Activated CD8-positive, alpha-beta T cell treated with anti-CD3 and anti-CD28 coated beads, Interleukin-2, amount 10 ng/mL, durations not matched to agents 7 days and 5 days (primary cell): ENCODE measurements at regions of chr17 and their contacts with region 1.

Region 1: GRCh38 chr17:42221937-42222745 is 27.8 kb upstream of the GHDC start:
- DNase-seq: peak; percentile 69
- ATAC-seq: peak; percentile 82
- H3K4me3 Mint-ChIP-seq: no peak overlapping the region
- H3K27ac Mint-ChIP-seq: peak overlapping the region; percentile 26
- H3K4me1 Mint-ChIP-seq: peaks cover 2% of the 10 kb centered on the region
- H3K27me3 Mint-ChIP-seq: no peaks in the 10 kb centered on the region

Region 2: DNA sequence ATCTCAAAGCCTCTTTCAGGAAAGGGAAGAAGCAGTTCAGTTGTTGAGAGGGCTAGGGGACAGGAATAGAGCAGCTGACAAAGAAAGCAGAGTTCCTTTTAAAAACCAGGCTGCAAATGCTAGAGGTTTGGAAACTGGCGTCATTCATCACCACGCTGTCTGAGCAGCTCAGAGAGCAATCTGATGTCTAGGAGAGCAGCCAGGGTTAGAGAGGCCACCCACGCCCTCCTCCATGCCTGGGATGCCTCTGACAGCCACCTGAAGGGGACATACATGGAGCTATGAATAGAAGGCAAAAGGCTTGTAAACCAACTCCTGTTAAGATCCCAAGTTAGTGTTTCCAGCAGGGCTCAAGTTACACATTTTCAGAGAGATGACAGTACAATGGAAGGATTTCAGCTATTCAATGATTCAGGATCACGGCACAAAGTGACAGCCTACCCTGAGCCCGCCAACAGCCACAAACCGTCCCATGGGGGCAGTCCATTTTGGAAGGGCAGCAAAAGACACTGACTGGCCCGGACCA is 79.7 kb before region 1 on chr17:
- CTCF ChIA-PET with region 1: no interaction called
- POLR2A ChIA-PET with region 1: no interaction called
- DNase-seq: no peak
- ATAC-seq: no peak
- H3K4me3 Mint-ChIP-seq: no peak overlapping the region
- H3K27ac Mint-ChIP-seq: no peak overlapping the region
- H3K4me1 Mint-ChIP-seq: peaks cover 5% of the 10 kb centered on the region
- H3K27me3 Mint-ChIP-seq: no peaks in the 10 kb centered on the region

Region 3: GRCh38 chr17:42171831-42172230 is 50.3 kb before region 1 on chr17:
- CTCF ChIA-PET with region 1: no interaction called
- POLR2A ChIA-PET with region 1: no interaction called
- DNase-seq: no peak
- ATAC-seq: no peak
- H3K4me3 Mint-ChIP-seq: no peak overlapping the region
- H3K27ac Mint-ChIP-seq: no peak overlapping the region
- H3K4me1 Mint-ChIP-seq: no peaks in the 10 kb centered on the region
- H3K27me3 Mint-ChIP-seq: no peaks in the 10 kb centered on the region

Region 4: DNA sequence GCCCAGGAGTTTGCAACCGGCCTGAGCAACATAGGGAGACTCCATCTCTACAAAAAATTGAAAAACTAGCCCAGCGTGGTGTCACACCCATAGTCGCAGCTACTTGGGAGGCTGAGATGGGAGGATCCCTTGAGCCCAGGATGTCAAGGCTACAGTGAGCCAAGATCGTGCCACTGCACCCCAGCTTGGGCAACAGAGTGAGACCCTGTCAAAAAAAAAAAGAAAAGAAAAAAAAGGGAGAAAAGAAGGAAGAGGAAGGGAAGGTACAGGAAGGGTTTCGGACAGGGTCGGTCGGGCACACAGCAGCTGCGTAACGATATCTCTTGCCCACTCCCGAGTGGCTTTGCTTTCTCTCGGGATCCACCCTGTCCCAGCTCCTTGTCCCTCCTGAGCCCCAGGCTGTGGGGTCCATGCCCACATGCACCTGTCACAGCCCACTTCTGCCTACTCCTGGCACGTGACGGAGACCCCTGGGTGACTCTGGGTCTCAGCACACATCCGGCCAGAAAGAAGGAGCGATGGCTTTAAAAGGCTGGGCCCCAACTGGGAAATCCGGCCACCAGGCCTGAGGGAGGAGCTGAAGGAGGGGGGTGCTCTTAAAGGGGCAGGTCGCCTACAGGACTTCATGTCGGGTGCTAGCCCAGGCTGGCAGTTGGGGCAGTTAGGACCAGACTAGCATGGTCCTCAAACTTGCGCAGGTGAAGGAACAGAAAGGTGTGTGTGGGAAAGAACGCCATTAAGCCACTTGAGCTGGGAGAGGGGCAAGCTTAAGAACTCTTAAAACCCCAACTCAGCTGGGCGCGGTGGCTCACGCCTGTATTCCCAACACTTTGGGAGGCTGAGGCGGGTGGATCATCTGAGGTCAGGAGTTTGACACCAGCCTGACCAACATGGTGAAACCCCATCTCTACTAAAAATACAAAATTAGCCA is 27.9 kb before region 1 on chr17 and contains the start of gene GHDC:
- CTCF ChIA-PET with region 1: interaction called, 18 read pairs
- POLR2A ChIA-PET with region 1: no interaction called
- DNase-seq: peak; percentile 90
- ATAC-seq: peak; percentile 98
- H3K4me3 Mint-ChIP-seq: peak within 1 kb of the TSS; percentile 92
- H3K27ac Mint-ChIP-seq: peak within 1 kb of the TSS; percentile 96
- H3K4me1 Mint-ChIP-seq: peaks cover 24% of the 10 kb centered on the region
- H3K27me3 Mint-ChIP-seq: no peaks in the 10 kb centered on the region
- total RNA-seq, gene GHDC: 16.6 to 17.2 TPM

Region 5: GRCh38 chr17:42248351-42249179 is 26.4 kb after region 1 on chr17:
- CTCF ChIA-PET with region 1: interaction called, 34 read pairs
- POLR2A ChIA-PET with region 1: interaction called, 15 read pairs
- DNase-seq: peak; percentile 88
- ATAC-seq: peak; percentile 93
- H3K4me3 Mint-ChIP-seq: peak overlapping the region; percentile 78
- H3K27ac Mint-ChIP-seq: peak overlapping the region; percentile 90
- H3K4me1 Mint-ChIP-seq: peaks cover 65% of the 10 kb centered on the region
- H3K27me3 Mint-ChIP-seq: no peaks in the 10 kb centered on the region

Region 6: GRCh38 chr17:42276359-42276608 is 54.1 kb after region 1 on chr17 and contains the start of gene STAT5B:
- CTCF ChIA-PET with region 1: interaction called, 35 read pairs
- POLR2A ChIA-PET with region 1: interaction called, 5 read pairs
- DNase-seq: peak; percentile 74
- ATAC-seq: peak; percentile 69
- H3K4me3 Mint-ChIP-seq: peak within 1 kb of the TSS; percentile 93
- H3K27ac Mint-ChIP-seq: peak within 1 kb of the TSS; percentile 86
- H3K4me1 Mint-ChIP-seq: peaks cover 46% of the 10 kb centered on the region
- H3K27me3 Mint-ChIP-seq: no peaks in the 10 kb centered on the region
- total RNA-seq, gene STAT5B: 92.7 to 94.4 TPM

Region 7: DNA sequence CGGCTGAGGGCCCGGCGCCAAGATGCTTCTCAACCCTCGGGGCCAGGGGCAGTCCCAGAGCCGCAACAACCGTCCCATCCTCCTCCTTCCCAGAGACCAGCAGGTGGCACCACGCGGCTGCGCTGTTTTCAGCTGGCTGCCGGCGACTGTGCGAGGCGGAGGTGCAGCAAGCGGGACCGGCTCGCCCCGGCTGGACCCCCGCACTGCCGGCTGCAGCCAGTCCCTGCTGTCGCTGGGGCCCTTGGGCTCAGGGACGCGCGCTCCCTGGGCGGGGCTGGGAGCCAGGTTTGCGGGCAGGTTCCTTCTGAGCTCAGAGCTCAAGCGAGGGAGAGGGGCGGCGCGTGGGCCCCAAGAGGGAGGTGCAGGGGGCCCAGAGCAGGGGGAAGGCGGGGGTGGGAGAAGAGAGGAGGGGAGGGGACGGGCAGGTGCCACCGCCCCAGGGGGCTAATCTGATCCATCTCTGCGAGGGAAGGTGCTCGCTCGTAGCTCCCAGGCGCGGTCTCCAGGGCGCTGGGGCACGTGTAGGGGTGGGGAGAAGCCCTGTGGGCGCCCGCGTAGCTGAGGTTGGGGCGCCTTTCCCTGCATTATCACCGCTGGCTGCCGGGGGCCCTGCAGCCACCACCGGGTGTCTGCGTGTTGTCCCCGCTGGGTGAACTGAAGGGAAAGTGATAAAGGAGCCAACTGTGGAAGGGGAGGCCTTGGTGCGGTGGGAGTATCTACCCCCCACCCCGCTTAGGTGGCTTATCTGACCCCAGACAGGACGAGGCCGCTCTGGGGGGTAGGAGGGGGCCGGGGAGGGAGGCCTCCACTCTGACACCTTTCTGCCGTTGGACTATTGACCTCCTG is 90.4 kb after region 1 on chr17:
- CTCF ChIA-PET with region 1: interaction called, 46 read pairs
- POLR2A ChIA-PET with region 1: interaction called, 4 read pairs
- DNase-seq: peak; percentile 85
- ATAC-seq: peak; percentile 77
- H3K4me3 Mint-ChIP-seq: peak overlapping the region; percentile 39
- H3K27ac Mint-ChIP-seq: peak overlapping the region; percentile 67
- H3K4me1 Mint-ChIP-seq: peaks cover 60% of the 10 kb centered on the region
- H3K27me3 Mint-ChIP-seq: no peaks in the 10 kb centered on the region